BJ (cell line): ENCODE measurements at regions of chr2 and their contacts with region 1.

Region 1: GRCh38 chr2:37168217-37168981 is 11.6 kb upstream of the EIF2AK2 start:
- DNase-seq: no peak
- H3K4me3 ChIP-seq: no peak overlapping the region
- H3K27me3 ChIP-seq: no peaks in the 10 kb centered on the region
- CTCF ChIP-seq: peak; percentile 76

Region 2: DNA sequence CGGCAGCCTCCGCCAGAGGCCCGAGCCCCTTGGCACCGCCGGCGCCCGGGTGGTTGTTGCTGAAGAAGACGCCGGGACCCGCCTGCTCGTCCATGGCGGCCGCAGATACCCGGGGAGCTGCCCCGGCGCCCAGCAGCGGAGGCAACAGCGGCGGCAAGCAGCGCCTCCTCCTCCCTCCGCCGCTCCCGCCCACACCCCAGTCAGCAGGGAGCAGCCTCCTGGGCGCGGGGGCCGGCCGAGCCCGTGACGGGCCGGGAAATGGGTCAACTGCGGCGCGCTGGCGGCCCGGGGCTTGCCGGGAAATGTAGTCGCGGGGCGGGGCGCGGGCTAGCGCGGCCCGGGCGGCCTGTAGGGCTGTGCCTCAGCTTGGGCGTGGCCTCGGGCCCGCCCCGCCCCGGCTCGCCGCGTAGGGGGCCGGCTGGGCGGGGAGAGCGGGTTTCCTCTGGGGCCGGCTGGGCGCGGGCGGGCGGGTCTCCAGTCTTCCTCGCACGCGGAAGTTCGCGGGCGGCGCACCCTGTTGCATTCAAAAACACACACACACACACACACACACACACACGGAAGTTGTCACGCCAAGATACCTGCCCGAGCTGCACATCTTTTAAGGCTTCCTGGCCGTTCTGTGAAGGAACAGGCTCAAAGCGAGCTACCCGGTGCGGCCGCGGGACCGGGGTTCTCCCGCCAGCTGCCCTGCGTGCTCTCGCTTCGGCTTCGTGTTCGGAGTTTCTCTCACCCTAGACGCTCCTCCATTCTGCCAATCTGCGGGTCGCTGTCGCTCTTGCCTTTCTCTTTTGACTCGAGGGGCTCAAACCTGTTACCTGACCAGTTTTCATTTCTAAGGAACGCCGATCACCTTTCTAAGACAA is 201.8 kb before region 1 on chr2 and contains the start of gene STRN:
- CTCF ChIA-PET with region 1: no interaction called
- POLR2A ChIA-PET with region 1: no interaction called
- DNase-seq: peak; percentile 77
- H3K4me3 ChIP-seq: peak within 1 kb of the TSS; percentile 88
- H3K27me3 ChIP-seq: no peaks in the 10 kb centered on the region
- CTCF ChIP-seq: no peak
- polyA plus RNA-seq, gene STRN: 8.5 and 18.0 TPM in 2 replicates

Region 3: DNA sequence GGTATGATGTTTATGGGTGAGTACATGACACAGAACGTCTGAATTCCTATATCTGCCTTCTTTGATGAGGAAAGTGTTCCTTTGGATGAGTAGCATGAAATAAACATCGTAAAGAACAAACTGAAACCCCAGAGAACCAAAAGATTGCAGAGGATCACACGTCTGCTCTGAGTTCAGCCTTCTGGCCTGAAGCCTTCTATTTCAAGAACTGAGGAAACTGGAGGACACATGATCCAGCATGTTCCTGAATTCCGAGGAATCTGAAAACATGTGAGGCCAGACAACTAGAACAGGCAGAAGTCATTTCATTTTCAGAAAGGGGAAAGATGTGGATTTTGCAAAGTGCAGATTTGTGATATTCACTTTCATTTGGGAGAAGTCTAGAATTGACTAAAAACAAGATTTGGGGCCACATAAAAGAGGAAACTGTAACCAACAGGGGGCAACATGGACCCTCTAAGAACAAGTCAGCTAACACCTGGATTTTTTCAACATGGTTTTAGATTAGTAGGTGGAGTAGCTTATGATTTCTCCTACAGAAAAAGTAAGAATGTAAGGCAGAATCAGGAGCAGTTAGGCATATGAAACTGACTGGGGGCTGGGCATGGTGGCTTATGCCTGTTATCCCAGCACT is 11.7 kb after region 1 on chr2:
- CTCF ChIA-PET with region 1: interaction called, 36 read pairs
- POLR2A ChIA-PET with region 1: no interaction called
- DNase-seq: no peak
- H3K4me3 ChIP-seq: no peak overlapping the region
- H3K27me3 ChIP-seq: no peaks in the 10 kb centered on the region; the same call in 1 of the 2 replicates
- CTCF ChIP-seq: no peak; the same call in 1 of the 2 replicates